A549 (cell line): ENCODE measurements at regions of chr12 and their contacts with region 1.

Region 1: DNA sequence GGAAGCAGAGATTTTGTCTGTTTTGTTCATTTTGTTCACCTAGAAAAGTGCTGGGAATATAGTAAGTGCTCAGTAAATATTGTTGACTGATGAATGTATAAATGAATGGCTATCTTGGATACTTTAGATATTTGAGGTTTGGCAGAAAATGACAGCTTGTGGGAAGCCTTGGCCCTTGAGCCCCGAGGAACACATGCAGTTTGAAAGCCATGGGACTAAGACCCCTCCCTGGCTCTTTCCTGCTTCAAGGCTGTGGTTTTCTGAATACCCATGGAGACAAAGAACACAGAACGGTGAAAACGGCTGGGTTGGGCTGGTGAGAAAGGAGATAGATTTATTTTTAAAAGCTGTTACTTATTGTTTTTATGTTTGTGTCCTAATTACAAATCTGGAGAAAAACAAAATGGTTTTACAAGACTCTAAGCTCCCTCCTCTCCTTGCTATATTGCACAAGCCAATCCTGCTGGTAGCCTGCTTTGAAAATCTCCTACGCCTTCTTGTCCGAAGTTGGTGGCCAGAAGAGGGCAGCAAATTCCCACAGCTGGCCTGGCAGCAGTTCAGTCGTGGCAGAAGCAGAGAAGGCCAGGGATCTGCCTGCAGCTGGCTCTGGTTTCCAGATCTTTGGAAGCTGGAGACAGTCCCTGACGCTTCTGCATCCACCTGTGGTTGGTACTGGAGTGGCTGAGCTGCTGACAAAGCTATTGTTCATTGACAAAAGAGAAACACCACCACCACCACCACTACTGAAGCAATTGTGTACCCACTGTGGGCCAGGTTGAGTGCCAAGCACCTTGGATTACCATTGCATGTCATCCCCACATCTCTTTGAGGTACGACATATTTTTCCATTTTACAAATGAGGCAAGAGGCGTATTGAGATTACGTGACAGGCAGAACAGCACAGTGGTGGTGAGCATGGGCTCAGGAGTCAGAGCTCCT is 5.2 kb upstream of the KRT85 start:
- DNase-seq: peak; percentile 93 to 95
- ATAC-seq: peak; percentile 95 to 97
- H3K4me3 ChIP-seq: no peak overlapping the region
- H3K27ac ChIP-seq: peak overlapping the region; percentile 34 to 67
- H3K4me1 ChIP-seq: peaks cover 10% of the 10 kb centered on the region; the same call in 1 of the 3 replicates
- CTCF ChIP-seq: peak; percentile 96
- EP300 ChIP-seq: no peak
- POLR2A ChIP-seq: no peak
- RAD21 ChIP-seq: peak; percentile 97 to 99

Region 2: DNA sequence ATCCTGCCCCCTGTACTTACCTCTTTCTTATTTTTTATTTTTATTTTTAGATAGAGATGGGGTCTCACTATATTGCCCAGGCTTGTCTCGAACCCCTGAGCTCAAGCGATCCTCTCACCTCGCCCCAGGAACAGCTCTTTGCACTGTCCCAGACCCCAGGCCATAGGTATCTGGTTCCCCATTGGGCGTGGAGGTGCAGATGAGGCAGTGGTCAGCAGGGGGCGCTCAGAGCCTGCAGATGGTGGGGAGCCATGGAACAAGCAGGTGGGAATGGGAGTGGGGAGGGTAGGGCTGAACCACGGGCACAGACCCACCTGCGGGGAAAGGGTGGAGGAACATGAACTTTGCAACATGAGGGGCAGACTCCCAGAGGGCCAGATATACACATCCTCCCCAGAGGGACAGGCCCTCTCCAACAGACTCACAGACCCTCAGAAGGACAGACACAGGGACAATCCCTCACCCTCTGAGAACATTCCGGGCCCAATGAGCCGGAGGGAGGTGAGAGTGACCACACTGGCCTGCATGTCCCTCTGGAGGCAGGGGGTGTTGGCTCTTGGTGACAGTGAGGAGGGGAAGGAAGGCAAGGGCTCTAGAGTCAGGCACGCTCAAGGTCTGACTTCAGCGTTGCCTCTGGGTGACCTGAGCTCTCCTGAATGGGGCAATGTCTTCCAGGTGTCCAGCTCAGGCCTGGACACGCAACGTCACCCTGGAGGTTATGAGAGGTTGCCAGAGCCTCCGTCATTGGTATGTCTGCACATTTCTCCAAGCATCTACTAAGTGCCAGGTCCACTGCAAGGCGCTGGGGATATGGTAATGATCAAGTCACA is 215.5 kb before region 1 on chr12:
- CTCF ChIA-PET with region 1: interaction called, 36 read pairs
- POLR2A ChIA-PET with region 1: no interaction called
- DNase-seq: peak; percentile 81 to 88
- ATAC-seq: peak; percentile 72 to 78
- H3K4me3 ChIP-seq: no peak overlapping the region
- H3K27ac ChIP-seq: peak overlapping the region; percentile 100
- H3K4me1 ChIP-seq: peaks cover 63% of the 10 kb centered on the region
- CTCF ChIP-seq: peak; percentile 97
- EP300 ChIP-seq: no peak
- POLR2A ChIP-seq: no peak
- RAD21 ChIP-seq: peak; percentile 99 to 100

Region 3: GRCh38 chr12:52232616-52233461 is 139.6 kb before region 1 on chr12 and contains the start of gene KRT7:
- CTCF ChIA-PET with region 1: no interaction called
- POLR2A ChIA-PET with region 1: no interaction called
- DNase-seq: peak; percentile 90 to 94
- ATAC-seq: peak; percentile 71 to 80
- H3K4me3 ChIP-seq: peak within 1 kb of the TSS; percentile 93
- H3K27ac ChIP-seq: peak within 1 kb of the TSS; percentile 97
- H3K4me1 ChIP-seq: peaks cover 70% of the 10 kb centered on the region
- CTCF ChIP-seq: peak; percentile 49
- EP300 ChIP-seq: 0 out of 5 replicates have a peak, but pooled peaks of 1 of the 2 experiments have one; percentile 19
- POLR2A ChIP-seq: peak; percentile 100
- RAD21 ChIP-seq: peak; percentile 54 to 68
- polyA plus RNA-seq, gene KRT7: 2,033 and 2,623 TPM in 2 replicates

Region 4: GRCh38 chr12:52333326-52333725 is 39.2 kb before region 1 on chr12:
- CTCF ChIA-PET with region 1: interaction called, 17 read pairs
- POLR2A ChIA-PET with region 1: no interaction called
- DNase-seq: no peak
- ATAC-seq: no peak
- H3K4me3 ChIP-seq: no peak overlapping the region
- H3K27ac ChIP-seq: no peak overlapping the region
- H3K4me1 ChIP-seq: peaks cover 24% of the 10 kb centered on the region
- CTCF ChIP-seq: no peak
- EP300 ChIP-seq: no peak
- POLR2A ChIP-seq: no peak
- RAD21 ChIP-seq: no peak

Region 5: GRCh38 chr12:52358575-52359350 is 13.7 kb before region 1 on chr12:
- CTCF ChIA-PET with region 1: interaction called, 72 read pairs
- POLR2A ChIA-PET with region 1: no interaction called
- DNase-seq: no peak
- ATAC-seq: no peak
- H3K4me3 ChIP-seq: no peak overlapping the region
- H3K27ac ChIP-seq: peak overlapping the region in 1 of 2 experiments; percentile 24; a peak in 1 of 6 replicates
- H3K4me1 ChIP-seq: 0 out of 3 replicates have a peak, but pooled peaks cover 3% of the 10 kb centered on the region
- CTCF ChIP-seq: no peak
- EP300 ChIP-seq: no peak
- POLR2A ChIP-seq: no peak
- RAD21 ChIP-seq: no peak

Region 6: DNA sequence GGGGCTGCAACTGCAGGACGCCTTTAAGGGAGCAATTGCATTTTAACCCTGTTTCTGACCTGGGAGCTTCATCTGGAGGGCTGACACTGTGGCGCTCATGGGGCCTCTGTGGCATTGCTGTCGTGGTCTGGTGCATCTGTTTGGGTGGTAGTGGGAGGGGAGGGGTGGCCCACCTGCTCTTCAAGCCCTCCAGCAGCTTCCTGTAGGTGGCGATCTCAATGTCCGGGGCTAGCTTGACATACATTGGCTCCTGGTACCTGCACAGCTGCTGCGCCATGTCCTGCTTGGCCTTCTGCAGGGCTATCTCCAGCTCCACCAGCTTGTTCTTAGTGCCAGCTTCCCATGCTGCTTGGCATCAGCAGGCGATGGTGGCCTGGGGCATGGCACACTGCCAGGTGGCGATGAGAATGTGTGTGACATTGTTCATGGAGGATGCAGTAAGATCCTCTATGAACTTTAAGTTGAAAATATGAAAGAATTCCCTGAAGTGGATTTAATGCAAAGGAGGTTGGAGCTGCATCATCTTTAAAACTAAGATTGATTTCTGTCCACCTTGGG is 41.4 kb after region 1 on chr12:
- CTCF ChIA-PET with region 1: interaction called, 10 read pairs
- POLR2A ChIA-PET with region 1: no interaction called
- DNase-seq: no peak
- ATAC-seq: peak in 1 of 2 experiments; percentile 40; a peak in 2 of 6 replicates
- H3K4me3 ChIP-seq: no peak overlapping the region
- H3K27ac ChIP-seq: peak overlapping the region in 1 of 2 experiments; percentile 37; a peak in 1 of 6 replicates
- H3K4me1 ChIP-seq: peaks cover 29% of the 10 kb centered on the region
- CTCF ChIP-seq: no peak
- EP300 ChIP-seq: no peak
- POLR2A ChIP-seq: no peak
- RAD21 ChIP-seq: no peak

Region 7: GRCh38 chr12:52423661-52424500 is 51.4 kb after region 1 on chr12:
- CTCF ChIA-PET with region 1: no interaction called
- POLR2A ChIA-PET with region 1: no interaction called
- DNase-seq: no peak
- ATAC-seq: no peak; a peak in 1 of 6 replicates
- H3K4me3 ChIP-seq: no peak overlapping the region
- H3K27ac ChIP-seq: no peak overlapping the region
- H3K4me1 ChIP-seq: no peaks in the 10 kb centered on the region
- CTCF ChIP-seq: no peak
- EP300 ChIP-seq: no peak
- POLR2A ChIP-seq: no peak
- RAD21 ChIP-seq: no peak

Region 8: GRCh38 chr12:52534487-52534886 is 162.0 kb after region 1 on chr12:
- CTCF ChIA-PET with region 1: interaction called, 31 read pairs
- POLR2A ChIA-PET with region 1: no interaction called
- DNase-seq: peak in 1 of 2 experiments; percentile 39
- ATAC-seq: peak in 1 of 2 experiments; percentile 46; a peak in 2 of 6 replicates
- H3K4me3 ChIP-seq: no peak overlapping the region
- H3K27ac ChIP-seq: no peak overlapping the region
- H3K4me1 ChIP-seq: peaks cover 14% of the 10 kb centered on the region
- CTCF ChIP-seq: peak; percentile 38; the same call in 2 of the 3 replicates
- EP300 ChIP-seq: no peak
- POLR2A ChIP-seq: no peak
- RAD21 ChIP-seq: peak in 1 of 2 experiments; percentile 55; a peak in 3 of 5 replicates

Region 9: GRCh38 chr12:52860063-52860823 is 487.8 kb after region 1 on chr12:
- CTCF ChIA-PET with region 1: interaction called, 1,221 read pairs
- POLR2A ChIA-PET with region 1: no interaction called
- DNase-seq: peak; percentile 52 to 89
- ATAC-seq: peak; percentile 93 to 95
- H3K4me3 ChIP-seq: no peak overlapping the region
- H3K27ac ChIP-seq: peak overlapping the region; percentile 46 to 78; a peak in 5 of 6 replicates
- H3K4me1 ChIP-seq: peaks cover 18% of the 10 kb centered on the region
- CTCF ChIP-seq: no peak
- EP300 ChIP-seq: no peak
- POLR2A ChIP-seq: no peak
- RAD21 ChIP-seq: no peak